ENCODE measurements at regions of chr18 and their contacts with region 1.

Region 1: DNA sequence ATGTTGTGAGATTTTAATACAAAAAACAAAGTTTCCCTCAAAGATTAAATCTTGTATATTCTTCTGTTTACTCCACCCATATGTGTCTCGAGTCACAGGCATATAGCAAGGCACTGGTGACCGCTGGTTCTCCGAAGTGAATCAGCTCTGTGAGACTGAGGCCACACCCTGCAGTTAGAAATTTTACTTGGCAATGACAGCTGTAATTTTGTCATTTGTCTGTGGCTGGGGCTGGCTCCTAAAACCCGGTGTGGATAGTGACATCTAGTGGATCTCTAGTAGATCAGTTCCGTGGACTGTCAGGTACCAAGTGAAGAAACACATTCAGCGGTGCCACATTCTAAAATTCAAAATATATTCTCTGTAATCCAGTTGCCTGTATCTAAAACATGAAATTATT is 278.0 kb downstream of the NEDD4L start:
- DNase-seq: no peak
- H3K4me3 ChIP-seq: no peak overlapping the region
- H3K27ac ChIP-seq: peak overlapping the region in 3 of 4 donors; percentile 9 to 39 (median 33)
- H3K4me1 ChIP-seq: peaks cover 6 to 27% (median 20%) of the 10 kb centered on the region in 4 donors
- H3K27me3 ChIP-seq: no peaks in the 10 kb centered on the region
- CTCF ChIP-seq: peak; percentile 52 to 71 (median 63)
- EP300 ChIP-seq: no peak
- POLR2A ChIP-seq: no peak

Region 2: DNA sequence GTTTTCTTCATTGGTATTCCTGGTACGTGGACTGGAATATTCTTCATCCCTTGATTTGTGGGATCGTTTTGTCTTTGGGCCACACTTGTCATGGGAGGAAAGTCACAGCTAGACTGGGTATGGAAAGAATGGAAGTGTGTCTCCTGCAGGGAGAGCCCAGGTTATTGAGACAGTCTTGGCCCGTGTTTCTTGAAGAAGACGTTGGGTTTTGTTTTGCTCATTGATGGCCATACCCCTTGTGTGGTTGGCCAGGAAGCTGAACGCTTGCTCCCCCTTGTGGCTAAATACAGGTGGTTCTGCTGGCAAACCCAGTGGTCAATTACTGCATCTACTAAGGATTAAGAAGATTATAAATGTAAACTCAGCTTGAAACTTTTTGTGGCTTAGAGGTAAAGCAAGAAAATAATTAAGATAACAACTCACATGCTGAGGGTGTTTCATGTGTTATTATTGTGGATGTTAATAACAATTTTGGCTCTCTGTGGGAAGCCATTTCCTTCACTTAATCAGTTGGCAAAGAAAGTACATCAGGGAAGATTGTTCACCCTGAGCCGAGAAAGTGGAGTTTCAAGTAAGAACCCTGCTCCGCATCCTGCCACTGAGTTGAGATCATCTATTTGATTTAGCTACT is 186.2 kb before region 1 on chr18:
- intact Hi-C with region 1: loop called (anchors 10 kb)
- DNase-seq: no peak
- H3K4me3 ChIP-seq: no peak overlapping the region
- H3K27ac ChIP-seq: no peak overlapping the region
- H3K4me1 ChIP-seq: peaks cover 0 to 16% (median 9%) of the 10 kb centered on the region in 4 donors
- H3K27me3 ChIP-seq: no peaks in the 10 kb centered on the region
- CTCF ChIP-seq: peak; percentile 65 to 77 (median 69)
- EP300 ChIP-seq: no peak
- POLR2A ChIP-seq: no peak

Region 3: DNA sequence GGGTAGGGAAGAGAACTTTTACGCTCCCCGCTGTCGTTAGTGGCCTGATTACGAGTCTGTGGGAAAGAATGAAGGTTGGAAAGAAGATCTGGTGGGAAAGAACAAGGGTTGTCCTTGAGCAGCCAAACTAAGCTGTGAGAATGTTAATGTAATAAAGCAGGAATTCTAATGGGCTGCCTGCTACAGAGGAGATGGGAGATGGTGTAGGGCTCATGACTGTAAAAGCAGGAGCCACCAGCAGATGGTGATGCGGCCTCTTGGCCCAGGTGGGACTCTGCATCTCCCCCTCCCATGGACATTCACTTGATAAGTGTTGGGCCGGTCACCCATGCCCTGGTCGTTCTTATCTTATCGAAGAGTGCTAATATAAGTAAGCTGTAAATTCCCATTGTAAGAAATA is 128.0 kb before region 1 on chr18:
- intact Hi-C with region 1: loop called (anchors 5 kb)
- DNase-seq: no peak
- H3K4me3 ChIP-seq: no peak overlapping the region
- H3K27ac ChIP-seq: no peak overlapping the region
- H3K4me1 ChIP-seq: peaks cover 2 to 41% (median 26%) of the 10 kb centered on the region in 4 donors
- H3K27me3 ChIP-seq: no peaks in the 10 kb centered on the region
- CTCF ChIP-seq: no peak
- EP300 ChIP-seq: no peak
- POLR2A ChIP-seq: no peak

Region 4: DNA sequence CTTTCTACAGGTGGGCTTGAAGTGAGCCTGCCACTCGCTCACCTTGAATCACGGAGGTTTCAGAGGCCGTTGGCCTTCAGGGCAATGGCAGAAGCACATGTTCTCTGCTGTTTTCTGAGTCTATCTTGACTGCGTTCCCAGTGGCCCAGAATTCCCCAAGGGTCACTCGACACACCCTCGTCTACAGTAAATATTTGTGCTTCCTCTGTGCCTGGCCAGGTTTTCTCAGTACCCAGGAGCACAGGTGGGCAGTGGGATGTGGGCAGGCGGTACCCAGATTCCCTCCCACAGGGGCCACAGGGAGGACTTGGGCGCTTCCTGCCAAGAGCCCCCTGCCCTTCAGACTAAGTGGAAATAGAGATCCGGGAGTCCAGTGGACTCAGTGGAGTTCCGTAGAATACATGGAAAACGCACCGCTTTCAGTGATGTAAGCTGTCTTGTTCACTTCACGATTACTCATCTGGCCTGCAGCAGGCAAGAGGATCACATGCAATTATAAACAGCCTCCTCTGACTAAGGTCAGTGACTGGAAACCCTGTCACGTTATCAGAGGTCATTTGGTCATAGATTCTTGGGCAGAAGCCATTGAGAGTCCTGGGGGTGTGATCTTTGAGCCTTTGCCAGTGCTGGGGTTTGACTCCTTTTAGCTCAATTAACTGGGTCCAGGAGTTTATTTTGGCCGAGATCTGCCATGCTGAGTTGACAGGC is 98.1 kb before region 1 on chr18:
- intact Hi-C with region 1: no loop called
- DNase-seq: peak; percentile 90
- H3K4me3 ChIP-seq: peak overlapping the region in 1 of 4 donors; percentile 24
- H3K27ac ChIP-seq: peak overlapping the region; percentile 59 to 72 (median 64)
- H3K4me1 ChIP-seq: peaks cover 16 to 44% (median 22%) of the 10 kb centered on the region in 4 donors
- H3K27me3 ChIP-seq: no peaks in the 10 kb centered on the region
- CTCF ChIP-seq: no peak
- EP300 ChIP-seq: no peak
- POLR2A ChIP-seq: no peak

Measured in esophagus muscularis mucosa (tissue), 4 donors.